MCF 10A (cell line): ENCODE measurements at regions of chr1 and their contacts with region 1.

Region 1: DNA sequence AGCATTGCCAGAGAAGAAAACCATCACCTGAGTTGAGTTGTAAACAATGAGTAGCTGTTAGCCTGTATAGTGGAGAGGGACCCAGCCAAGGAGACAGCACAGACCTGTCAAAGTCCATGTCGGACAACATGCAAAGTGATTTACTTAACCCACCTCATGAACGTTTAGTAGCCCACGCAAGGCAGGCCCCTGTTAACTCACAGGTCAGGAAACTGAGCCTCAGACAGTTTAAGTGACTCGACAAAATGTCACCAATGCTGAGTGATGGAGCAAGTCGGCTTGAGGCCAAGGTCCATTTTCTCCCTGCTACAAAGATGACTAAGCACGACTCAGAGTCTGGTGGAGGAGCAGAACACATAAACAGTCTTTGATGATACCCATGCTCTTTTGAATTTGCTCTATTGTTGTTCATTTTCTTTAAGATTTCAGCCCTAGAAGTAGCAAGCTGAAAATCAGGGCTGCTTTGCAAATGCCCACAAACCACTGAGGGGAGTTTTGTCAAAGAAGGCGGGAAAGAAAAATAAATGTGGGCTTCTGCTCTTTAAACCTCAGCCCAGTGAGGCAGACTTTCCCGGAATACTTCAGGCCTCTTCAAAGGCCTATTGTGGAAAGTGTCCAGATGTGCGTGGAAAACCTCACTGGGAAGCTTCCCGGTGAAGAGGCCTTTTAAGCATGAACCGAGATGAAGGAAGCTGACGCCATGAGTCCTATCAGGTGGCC is 83.8 kb upstream of the HOOK1 start:
- DNase-seq: peak; percentile 91
- H3K4me3 Mint-ChIP-seq: no peak overlapping the region
- H3K27ac Mint-ChIP-seq: peak overlapping the region; percentile 74
- H3K4me1 Mint-ChIP-seq: peaks cover 38% of the 10 kb centered on the region
- H3K27me3 Mint-ChIP-seq: no peaks in the 10 kb centered on the region
- CTCF ChIP-seq: no peak

Region 2: GRCh38 chr1:59707178-59707791 is 23.6 kb before region 1 on chr1:
- CTCF ChIA-PET with region 1: interaction called, 6 read pairs
- POLR2A ChIA-PET with region 1: interaction called, 10 read pairs
- intact Hi-C with region 1: no loop called
- DNase-seq: peak; percentile 90
- H3K4me3 Mint-ChIP-seq: no peak overlapping the region
- H3K27ac Mint-ChIP-seq: peak overlapping the region; percentile 33
- H3K4me1 Mint-ChIP-seq: peaks cover 46% of the 10 kb centered on the region
- H3K27me3 Mint-ChIP-seq: no peaks in the 10 kb centered on the region
- CTCF ChIP-seq: no peak

Region 3: GRCh38 chr1:59718064-59718988 is 12.6 kb before region 1 on chr1:
- CTCF ChIA-PET with region 1: interaction called, 15 read pairs
- POLR2A ChIA-PET with region 1: interaction called, 3 read pairs
- intact Hi-C with region 1: no loop called
- DNase-seq: peak; percentile 53
- H3K4me3 Mint-ChIP-seq: no peak overlapping the region
- H3K27ac Mint-ChIP-seq: no peak overlapping the region
- H3K4me1 Mint-ChIP-seq: no peaks in the 10 kb centered on the region
- H3K27me3 Mint-ChIP-seq: no peaks in the 10 kb centered on the region
- CTCF ChIP-seq: peak; percentile 44

Region 4: GRCh38 chr1:59743324-59744091 is 12.6 kb after region 1 on chr1:
- CTCF ChIA-PET with region 1: interaction called, 15 read pairs
- POLR2A ChIA-PET with region 1: interaction called, 79 read pairs
- intact Hi-C with region 1: no loop called
- DNase-seq: no peak
- H3K4me3 Mint-ChIP-seq: no peak overlapping the region
- H3K27ac Mint-ChIP-seq: peak overlapping the region; percentile 2
- H3K4me1 Mint-ChIP-seq: no peaks in the 10 kb centered on the region
- H3K27me3 Mint-ChIP-seq: no peaks in the 10 kb centered on the region
- CTCF ChIP-seq: no peak

Region 5: DNA sequence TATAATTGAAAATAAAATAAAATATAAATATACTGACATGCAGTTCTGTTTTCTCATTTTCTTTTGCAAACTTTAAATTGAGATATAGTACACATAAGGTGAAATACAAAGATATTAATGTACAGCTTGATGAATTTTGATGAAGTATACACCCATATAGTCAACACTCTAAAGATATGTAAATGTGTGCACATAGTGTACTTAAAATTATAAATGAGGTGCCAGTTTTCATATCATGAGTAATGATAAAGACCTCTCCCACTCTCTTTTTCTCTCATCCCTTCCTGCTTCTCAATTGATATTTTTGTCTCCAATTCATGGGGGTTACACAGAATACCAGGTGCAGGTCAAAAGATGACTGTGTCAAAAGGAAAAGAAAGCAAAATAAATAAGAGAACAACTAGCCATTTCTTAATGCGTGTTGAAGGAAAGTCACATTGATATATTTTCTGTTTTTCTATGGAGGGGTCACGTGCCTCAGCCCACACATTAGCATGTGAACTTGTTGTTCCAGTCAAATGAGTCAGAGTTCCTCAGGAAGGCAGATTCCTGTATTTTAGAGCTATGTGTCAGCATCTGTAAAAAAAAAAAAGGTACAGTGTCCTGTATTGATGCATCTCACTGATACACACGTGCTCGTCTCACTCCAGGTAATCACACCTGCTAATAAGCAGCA is 19.5 kb after region 1 on chr1:
- CTCF ChIA-PET with region 1: interaction called, 15 read pairs
- POLR2A ChIA-PET with region 1: interaction called, 79 read pairs
- intact Hi-C with region 1: no loop called
- DNase-seq: peak; percentile 87
- H3K4me3 Mint-ChIP-seq: peak overlapping the region; percentile 30
- H3K27ac Mint-ChIP-seq: peak overlapping the region; percentile 91
- H3K4me1 Mint-ChIP-seq: peaks cover 18% of the 10 kb centered on the region
- H3K27me3 Mint-ChIP-seq: no peaks in the 10 kb centered on the region
- CTCF ChIP-seq: no peak

Region 6: DNA sequence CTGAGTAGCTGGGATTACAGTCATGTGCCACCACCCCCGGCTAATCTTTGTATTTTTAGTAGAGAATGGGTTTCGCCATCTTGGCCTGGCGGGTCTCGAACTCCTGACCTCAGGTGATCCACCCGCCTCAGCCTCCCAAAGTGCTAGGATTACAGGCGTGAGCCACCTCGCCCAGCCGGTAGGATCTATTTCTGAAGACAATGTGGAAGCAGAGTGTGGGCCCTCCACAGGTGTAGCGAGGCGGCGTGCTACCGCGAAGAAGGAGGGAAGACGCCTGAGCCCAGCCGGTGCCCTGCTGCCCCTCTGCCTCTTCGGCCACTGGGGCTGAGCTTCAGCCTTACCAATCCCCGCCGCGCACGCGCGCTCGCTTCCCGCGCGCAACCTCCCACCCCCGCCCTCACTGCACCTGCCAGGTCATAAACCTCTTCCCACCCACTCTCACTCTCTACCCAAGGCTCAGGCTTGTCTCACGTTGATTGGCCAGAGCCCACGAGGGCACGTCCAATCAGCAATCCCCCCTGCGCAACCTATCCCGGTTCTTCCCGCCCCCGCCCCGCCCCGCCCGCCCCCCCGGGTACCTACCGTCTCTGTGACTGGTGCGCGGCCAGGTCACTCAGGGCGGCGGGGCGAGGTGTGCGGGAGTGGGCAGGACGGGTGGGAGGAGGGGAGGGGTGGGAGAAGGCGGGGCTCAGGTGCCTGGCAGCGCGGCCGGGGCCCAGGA is 83.4 kb after region 1 on chr1:
- CTCF ChIA-PET with region 1: no interaction called
- POLR2A ChIA-PET with region 1: no interaction called
- intact Hi-C with region 1: no loop called
- DNase-seq: peak; percentile 98
- H3K4me3 Mint-ChIP-seq: no peak overlapping the region
- H3K27ac Mint-ChIP-seq: no peak overlapping the region
- H3K4me1 Mint-ChIP-seq: peaks cover 5% of the 10 kb centered on the region
- H3K27me3 Mint-ChIP-seq: no peaks in the 10 kb centered on the region
- CTCF ChIP-seq: no peak